ENCODE measurements at regions of chr9 and their contacts with region 1.

Region 1: DNA sequence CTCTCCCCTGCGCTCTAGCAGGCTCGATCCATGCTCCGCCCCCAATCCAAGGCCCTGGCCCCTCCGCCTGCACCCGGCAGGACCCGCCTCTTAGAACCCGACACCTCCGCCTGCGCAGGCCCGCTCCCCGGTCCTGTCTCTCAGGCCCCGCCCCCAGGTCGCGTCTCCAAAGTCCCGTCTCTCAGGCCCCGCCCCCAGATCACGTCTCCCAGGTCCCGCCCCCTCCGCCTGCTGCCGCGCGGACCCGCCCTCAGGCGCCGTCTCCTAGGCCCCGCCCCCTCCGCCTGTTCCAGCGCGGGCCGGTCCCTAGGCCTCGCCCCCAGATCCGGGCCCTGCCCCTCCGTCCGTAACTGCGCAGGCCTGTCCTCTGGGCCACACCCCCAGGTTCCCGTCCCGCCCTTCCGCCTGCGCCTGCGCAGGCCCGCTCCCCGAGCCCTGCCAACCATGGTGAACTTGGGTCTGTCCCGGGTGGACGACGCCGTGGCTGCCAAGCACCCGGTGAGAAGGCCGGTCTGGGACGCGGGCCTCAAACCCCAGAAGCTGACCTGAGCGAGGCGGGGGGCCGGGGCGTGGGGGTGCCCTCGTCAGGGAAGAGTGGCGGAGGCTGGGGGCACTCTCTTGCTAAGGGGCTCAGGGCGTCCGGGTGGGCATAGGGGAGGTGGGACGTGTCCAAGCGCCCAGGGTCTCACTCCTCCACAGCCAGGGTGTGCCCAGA is at the start of gene TMEM141:
- DNase-seq: peak; percentile 99 to 100 (median 99)
- ATAC-seq: peak; percentile 92
- H3K4me3 ChIP-seq: peak within 1 kb of the TSS; percentile 94
- H3K4me3 Mint-ChIP-seq: peak within 1 kb of the TSS; percentile 76 to 90 (median 86)
- H3K27ac ChIP-seq: peak within 1 kb of the TSS; percentile 91
- H3K27ac Mint-ChIP-seq: peak within 1 kb of the TSS; percentile 57 to 98 (median 92)
- H3K4me1 ChIP-seq: peaks cover 18 to 22% of the 10 kb centered on the region in 2 donors
- H3K4me1 Mint-ChIP-seq: peaks cover 10 to 40% (median 31%) of the 10 kb centered on the region in 7 donors
- H3K27me3 ChIP-seq: no peaks in the 10 kb centered on the region
- H3K27me3 Mint-ChIP-seq: peaks cover 0 to 16% (median 0%) of the 10 kb centered on the region in 5 donors
- total RNA-seq, gene TMEM141: 27.2 to 54.9 (median 36.2) TPM

Region 2: GRCh38 chr9:136734837-136735496 is 56.1 kb before region 1 on chr9:
- CTCF ChIA-PET with region 1: no interaction called
- POLR2A ChIA-PET with region 1: no interaction called
- intact Hi-C with region 1: no loop called
- DNase-seq: no peak
- ATAC-seq: no peak
- H3K4me3 ChIP-seq: no peak overlapping the region
- H3K4me3 Mint-ChIP-seq: no peak overlapping the region
- H3K27ac ChIP-seq: no peak overlapping the region
- H3K27ac Mint-ChIP-seq: no peak overlapping the region
- H3K4me1 ChIP-seq: no peaks in the 10 kb centered on the region
- H3K4me1 Mint-ChIP-seq: peaks cover 0 to 3% (median 0%) of the 10 kb centered on the region in 7 donors
- H3K27me3 ChIP-seq: no peaks in the 10 kb centered on the region
- H3K27me3 Mint-ChIP-seq: peaks cover 0 to 4% (median 0%) of the 10 kb centered on the region in 5 donors

Region 3: DNA sequence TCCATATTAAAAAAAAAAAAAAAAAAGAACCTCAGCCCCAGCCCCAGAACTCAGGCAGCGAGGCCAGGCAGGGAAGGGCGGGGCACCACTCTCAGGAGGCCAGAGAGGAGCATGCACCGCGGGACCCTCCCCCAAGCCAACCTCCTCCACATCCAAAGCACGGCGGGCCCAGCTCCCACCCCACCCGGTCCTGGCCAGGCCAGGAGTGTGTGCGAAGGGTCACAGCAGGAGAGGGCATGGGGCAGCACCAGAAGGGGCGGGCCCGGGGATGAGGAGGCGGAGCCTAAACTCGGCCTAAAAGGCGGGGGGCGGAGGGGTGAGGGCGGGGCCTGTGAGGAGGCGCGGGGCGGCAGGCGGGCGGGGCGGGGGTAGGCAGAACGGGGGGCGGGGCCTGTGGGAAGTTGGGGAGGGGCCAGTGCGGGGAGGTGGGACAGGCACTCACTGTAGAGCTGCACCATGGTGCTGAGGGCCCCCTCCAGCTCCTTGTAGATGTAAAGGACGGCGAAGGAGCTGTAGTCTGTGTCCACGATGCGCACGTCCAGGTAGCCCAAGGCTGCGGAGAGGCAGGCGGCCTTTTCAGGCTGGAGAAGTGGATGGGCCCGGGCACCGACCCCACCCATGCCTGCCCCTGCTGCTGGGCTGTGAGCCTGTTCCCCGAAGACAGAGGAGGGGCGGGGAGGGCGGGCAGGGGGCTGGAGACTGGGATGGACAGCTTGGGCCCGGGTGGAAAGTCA is 28.0 kb before region 1 on chr9:
- CTCF ChIA-PET with region 1: no interaction called
- POLR2A ChIA-PET with region 1: no interaction called
- intact Hi-C with region 1: no loop called
- DNase-seq: peak in 1 of 9 donors; percentile 67
- ATAC-seq: peak; percentile 47
- H3K4me3 ChIP-seq: no peak overlapping the region
- H3K4me3 Mint-ChIP-seq: no peak overlapping the region
- H3K27ac ChIP-seq: no peak overlapping the region
- H3K27ac Mint-ChIP-seq: no peak overlapping the region
- H3K4me1 ChIP-seq: no peaks in the 10 kb centered on the region
- H3K4me1 Mint-ChIP-seq: peaks cover 0 to 12% (median 0%) of the 10 kb centered on the region in 7 donors
- H3K27me3 ChIP-seq: no peaks in the 10 kb centered on the region
- H3K27me3 Mint-ChIP-seq: peaks cover 4 to 26% (median 15%) of the 10 kb centered on the region in 5 donors

Region 4: DNA sequence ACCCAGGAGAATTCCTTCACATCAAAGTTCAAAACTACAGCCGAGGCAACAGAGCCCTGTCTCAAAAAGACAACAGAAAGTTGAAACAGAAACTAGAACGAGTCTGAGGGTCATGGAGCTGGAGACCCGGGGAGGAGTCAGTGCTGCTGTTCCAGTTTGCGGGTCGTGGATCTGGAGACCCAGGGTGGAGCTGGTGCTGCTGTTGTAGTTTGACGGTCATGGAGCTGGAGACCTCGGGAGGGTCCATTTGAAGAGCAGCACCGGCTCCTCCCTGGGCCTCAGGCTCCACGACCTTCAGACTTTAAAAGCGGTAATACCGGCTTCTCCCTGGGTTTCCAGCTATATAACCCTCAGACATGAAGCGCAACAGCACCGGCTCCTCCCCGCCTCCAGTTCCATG is 13.7 kb before region 1 on chr9:
- CTCF ChIA-PET with region 1: interaction called, 12 read pairs
- POLR2A ChIA-PET with region 1: no interaction called
- intact Hi-C with region 1: no loop called
- DNase-seq: no peak
- ATAC-seq: no peak
- H3K4me3 ChIP-seq: no peak overlapping the region
- H3K4me3 Mint-ChIP-seq: no peak overlapping the region
- H3K27ac ChIP-seq: no peak overlapping the region
- H3K27ac Mint-ChIP-seq: no peak overlapping the region
- H3K4me1 ChIP-seq: no peaks in the 10 kb centered on the region
- H3K4me1 Mint-ChIP-seq: peaks cover 0 to 11% (median 1%) of the 10 kb centered on the region in 7 donors
- H3K27me3 ChIP-seq: no peaks in the 10 kb centered on the region
- H3K27me3 Mint-ChIP-seq: peaks cover 10 to 40% (median 13%) of the 10 kb centered on the region in 5 donors

Region 5: DNA sequence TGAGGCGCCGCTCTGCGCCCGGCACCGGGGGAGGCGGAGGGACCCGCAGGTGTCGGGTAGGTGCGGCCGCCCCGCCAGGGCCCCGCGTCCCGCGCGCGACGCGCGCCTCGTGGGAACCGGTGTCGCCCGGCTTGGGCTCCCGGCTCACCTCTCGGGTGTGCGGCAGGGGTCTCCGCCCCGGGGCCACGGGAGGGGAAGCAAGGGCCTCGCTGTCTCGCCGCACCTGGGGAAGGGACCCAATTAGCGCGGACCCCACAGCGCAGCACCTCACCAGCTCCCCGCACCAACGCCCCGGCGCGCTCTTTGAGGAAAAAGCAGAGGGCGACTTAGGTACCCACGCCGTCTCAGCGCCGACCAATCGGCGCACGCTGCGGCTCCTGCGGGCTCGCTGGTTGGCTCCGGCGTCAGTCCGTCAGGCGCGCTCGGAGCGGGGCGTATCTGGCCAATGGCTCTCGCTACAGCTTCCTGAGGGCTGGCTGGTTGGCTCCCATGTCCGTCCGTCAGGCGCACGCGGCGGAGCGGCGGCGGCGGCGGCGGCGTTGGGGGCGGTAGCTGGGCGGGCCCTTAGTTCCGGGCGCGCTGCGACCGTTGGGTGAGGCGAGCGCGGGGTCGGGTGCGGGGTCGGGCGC is 95.0 kb after region 1 on chr9 and contains the start of gene TRAF2:
- CTCF ChIA-PET with region 1: no interaction called
- POLR2A ChIA-PET with region 1: interaction called, 4 read pairs
- intact Hi-C with region 1: loop called (anchors 1 to 2 kb)
- DNase-seq: peak; percentile 93 to 98 (median 96)
- ATAC-seq: peak; percentile 95
- H3K4me3 ChIP-seq: peak within 1 kb of the TSS; percentile 76
- H3K4me3 Mint-ChIP-seq: peak within 1 kb of the TSS; percentile 83 to 99 (median 86)
- H3K27ac ChIP-seq: peak within 1 kb of the TSS; percentile 97
- H3K27ac Mint-ChIP-seq: peak within 1 kb of the TSS; percentile 78 to 95 (median 89)
- H3K4me1 ChIP-seq: peaks cover 26 to 29% of the 10 kb centered on the region in 2 donors
- H3K4me1 Mint-ChIP-seq: peaks cover 17 to 53% (median 37%) of the 10 kb centered on the region in 7 donors
- H3K27me3 ChIP-seq: no peaks in the 10 kb centered on the region
- H3K27me3 Mint-ChIP-seq: no peaks in the 10 kb centered on the region
- total RNA-seq, gene TRAF2: 14.6 to 72.8 (median 29.6) TPM

Region 6: DNA sequence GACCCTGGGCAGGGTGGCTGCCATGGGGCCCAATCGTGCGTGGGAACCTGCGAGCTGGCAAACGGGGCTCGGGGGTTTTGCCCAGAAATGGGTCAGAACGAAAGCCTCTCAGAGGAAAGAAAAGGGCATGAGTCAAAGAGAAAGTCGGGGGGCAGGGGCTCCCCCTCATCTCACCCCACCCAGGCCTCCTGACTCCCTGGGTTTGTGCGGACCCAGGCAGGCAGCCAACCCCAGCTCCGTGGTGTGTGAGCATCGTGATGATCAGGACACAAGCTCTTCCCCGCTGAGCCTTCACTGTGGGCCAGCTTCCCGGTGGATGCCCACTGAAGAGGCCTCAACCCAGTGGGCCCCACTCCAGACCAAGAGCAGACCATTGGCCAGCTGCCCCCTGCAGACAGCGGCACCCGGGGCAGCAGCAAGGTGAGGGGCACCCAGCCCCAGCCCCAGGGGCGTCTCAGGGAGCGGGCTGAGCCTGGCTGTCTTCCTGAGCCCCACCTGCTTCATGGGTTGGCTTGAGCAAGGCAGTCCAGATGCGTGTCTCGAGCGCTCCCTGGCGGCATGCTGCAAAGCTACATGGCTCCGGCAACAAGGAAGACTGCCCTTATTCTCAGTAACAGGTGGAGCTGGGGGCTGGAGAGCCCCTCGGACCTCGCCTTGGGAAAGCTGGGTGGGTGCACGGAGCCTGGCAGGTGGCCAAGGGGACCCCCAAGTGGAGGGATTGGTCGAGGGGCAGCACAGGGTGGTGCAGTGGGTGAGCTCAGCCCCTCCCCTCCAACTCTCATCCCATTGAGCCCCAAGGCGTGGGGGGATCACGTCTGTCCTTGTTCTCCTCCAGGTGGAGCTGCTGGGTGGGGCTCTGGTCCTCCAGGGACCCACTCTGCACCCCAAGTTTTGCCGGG is 244.0 kb after region 1 on chr9:
- CTCF ChIA-PET with region 1: interaction called, 49 read pairs
- POLR2A ChIA-PET with region 1: interaction called, 4 read pairs
- intact Hi-C with region 1: loop called (anchors 1 kb)
- DNase-seq: peak; percentile 74 to 88 (median 82)
- ATAC-seq: peak; percentile 84
- H3K4me3 ChIP-seq: peak overlapping the region; percentile 34
- H3K4me3 Mint-ChIP-seq: peak overlapping the region; percentile 55 to 81 (median 66)
- H3K27ac ChIP-seq: no peak overlapping the region
- H3K27ac Mint-ChIP-seq: peak overlapping the region in 4 of 9 donors; percentile 19 to 85 (median 43)
- H3K4me1 ChIP-seq: peaks cover 36 to 41% of the 10 kb centered on the region in 2 donors
- H3K4me1 Mint-ChIP-seq: peaks cover 11 to 36% (median 24%) of the 10 kb centered on the region in 7 donors
- H3K27me3 ChIP-seq: no peaks in the 10 kb centered on the region
- H3K27me3 Mint-ChIP-seq: peaks cover 0 to 3% (median 0%) of the 10 kb centered on the region in 5 donors

Region 7: DNA sequence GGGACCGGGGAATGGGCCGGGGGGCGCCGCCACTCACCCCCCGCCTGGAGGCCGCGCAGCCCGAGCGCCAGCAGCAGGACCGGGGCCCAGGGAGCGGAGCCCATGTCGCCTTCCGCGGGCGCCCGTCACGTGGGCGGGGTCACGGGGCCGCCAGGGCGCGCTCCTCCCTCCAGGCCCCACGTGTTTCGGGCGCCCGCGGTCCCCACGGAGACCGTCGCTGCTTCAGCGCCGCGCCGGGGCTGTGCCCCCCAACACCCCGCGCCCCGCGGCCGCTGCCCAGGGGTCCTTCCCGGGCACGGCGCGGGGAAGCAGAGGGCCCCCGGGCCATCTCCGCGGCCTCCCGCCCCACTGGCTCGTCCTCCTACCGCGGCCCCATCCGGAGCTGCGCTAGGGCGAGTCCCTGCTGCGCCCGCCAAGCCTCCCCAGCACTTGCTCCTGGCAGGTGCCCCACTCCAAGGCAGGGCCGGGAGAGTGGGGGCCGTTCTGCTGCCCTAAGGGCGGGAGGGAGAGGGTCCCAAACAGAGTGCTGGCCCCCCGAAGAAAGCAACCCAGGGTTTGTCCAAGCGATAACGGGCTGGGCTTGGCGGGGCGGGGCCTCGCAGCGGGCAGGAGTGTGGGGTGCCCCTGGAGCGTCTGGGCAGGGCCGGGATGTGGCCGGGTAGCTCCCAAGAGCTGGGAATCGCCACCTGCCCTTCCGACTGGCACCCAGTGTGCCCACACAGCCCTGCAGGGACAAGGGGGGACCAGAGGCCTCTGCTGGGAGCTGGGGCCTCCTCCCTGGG is 323.7 kb after region 1 on chr9 and contains the start of gene DPP7:
- CTCF ChIA-PET with region 1: no interaction called
- POLR2A ChIA-PET with region 1: no interaction called
- intact Hi-C with region 1: loop called in 1 of 2 experiments (anchors 1 kb)
- DNase-seq: peak; percentile 63 to 88 (median 80)
- ATAC-seq: peak; percentile 93
- H3K4me3 ChIP-seq: peak within 1 kb of the TSS; percentile 54
- H3K4me3 Mint-ChIP-seq: peak within 1 kb of the TSS; percentile 38 to 82 (median 69)
- H3K27ac ChIP-seq: peak within 1 kb of the TSS; percentile 81
- H3K27ac Mint-ChIP-seq: peak within 1 kb of the TSS in 4 of 9 donors; percentile 24 to 78 (median 40)
- H3K4me1 ChIP-seq: peaks cover 0 to 4% of the 10 kb centered on the region in 2 donors
- H3K4me1 Mint-ChIP-seq: peaks cover 0 to 13% (median 6%) of the 10 kb centered on the region in 7 donors
- H3K27me3 ChIP-seq: no peaks in the 10 kb centered on the region
- H3K27me3 Mint-ChIP-seq: no peaks in the 10 kb centered on the region
- total RNA-seq, gene DPP7: 235 to 328 (median 298) TPM

Region 8: GRCh38 chr9:137240861-137241489 is 449.9 kb after region 1 on chr9 and contains the start of gene TUBB4B:
- CTCF ChIA-PET with region 1: no interaction called
- POLR2A ChIA-PET with region 1: interaction called, 4 read pairs
- intact Hi-C with region 1: loop called (anchors 1 kb)
- DNase-seq: peak; percentile 87 to 99 (median 98)
- ATAC-seq: peak; percentile 87
- H3K4me3 ChIP-seq: peak within 1 kb of the TSS; percentile 72
- H3K4me3 Mint-ChIP-seq: peak within 1 kb of the TSS; percentile 83 to 97 (median 92)
- H3K27ac ChIP-seq: peak within 1 kb of the TSS; percentile 83
- H3K27ac Mint-ChIP-seq: peak within 1 kb of the TSS; percentile 82 to 94 (median 93)
- H3K4me1 ChIP-seq: peaks cover 15 to 23% of the 10 kb centered on the region in 2 donors
- H3K4me1 Mint-ChIP-seq: peaks cover 12 to 35% (median 21%) of the 10 kb centered on the region in 7 donors
- H3K27me3 ChIP-seq: no peaks in the 10 kb centered on the region
- H3K27me3 Mint-ChIP-seq: peaks cover 0 to 4% (median 0%) of the 10 kb centered on the region in 5 donors
- total RNA-seq, gene TUBB4B: 44.2 to 260 (median 87.5) TPM